ENCODE measurements at regions of chr11 and their contacts with region 1.

Region 1: DNA sequence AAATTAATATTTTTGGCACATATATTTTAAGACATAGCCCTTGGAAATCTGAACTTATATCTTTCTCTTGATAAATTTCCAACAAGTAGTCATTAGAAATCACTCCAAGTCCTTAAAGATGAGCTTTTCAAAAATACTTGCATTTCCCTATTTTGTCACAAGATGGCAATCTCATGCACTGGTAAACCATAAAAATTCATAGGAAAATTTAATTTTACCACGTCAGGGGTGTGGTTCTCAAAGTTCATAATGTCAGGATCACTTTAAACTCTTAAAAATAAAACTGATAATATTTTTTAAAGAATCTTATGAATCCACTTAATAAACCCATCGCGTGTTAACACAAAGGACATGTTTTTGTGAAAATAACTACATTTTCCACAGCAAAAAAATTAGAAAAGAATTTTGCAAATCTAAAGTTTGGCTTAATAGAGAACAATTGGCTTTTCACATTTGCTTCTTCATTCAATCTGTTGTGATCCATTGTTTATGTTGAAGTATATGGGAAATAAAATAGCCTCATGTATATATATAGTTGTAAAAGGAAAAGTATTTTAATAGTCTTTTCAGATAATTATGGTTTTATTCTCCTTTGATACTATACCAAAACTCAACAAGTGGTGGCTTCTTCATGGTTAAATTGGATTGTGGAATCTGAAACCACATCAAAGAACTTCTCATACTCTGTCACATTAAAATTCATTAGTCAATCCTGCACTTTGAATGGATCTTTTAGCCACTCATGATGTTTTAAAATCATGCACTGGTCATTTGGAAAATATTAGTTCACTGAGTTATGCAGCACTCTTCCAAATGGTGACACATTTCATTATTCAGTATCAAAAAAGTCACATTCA is 169.1 kb downstream of the CADM1 start:
- DNase-seq: no peak
- ATAC-seq: no peak

Region 2: GRCh38 chr11:115042002-115042401 is 293.2 kb before region 1 on chr11:
- intact Hi-C with region 1: no loop called
- DNase-seq: no peak
- ATAC-seq: no peak

Region 3: DNA sequence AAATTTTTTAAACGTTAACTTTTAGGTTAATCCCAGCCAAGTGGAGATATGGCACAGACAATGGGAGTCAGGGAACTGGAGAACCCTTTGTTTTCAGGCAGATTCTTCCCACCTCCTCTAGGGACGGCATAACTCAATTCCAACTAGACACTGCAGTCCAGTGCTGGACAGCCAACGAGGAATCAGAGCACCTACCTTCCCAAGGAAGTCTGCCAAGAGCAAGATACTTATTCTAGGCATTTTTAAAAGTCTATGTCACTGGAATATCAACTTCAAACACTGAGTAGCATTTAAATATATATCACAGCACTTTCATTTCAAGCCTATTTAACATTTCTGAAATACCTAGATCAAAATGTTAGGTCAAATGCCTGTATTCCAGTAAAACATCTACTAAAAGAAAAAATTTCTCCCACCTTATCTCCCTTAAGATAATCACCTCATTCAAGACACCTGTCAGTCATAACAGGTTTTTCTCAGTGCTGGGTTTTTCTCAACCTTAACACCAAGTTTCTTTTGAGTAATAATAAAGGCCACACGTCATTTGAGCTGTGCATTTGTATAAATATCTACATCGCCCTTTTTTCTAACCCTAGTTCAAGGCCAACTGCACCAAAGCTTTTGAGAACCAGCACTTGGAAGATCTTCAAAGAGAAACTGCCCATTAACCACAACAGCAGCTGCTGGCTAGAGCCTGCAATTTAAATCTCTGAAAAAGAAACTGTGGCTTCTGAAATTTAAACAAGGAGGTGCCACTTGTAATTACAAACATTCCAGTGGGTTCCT is 161.9 kb after region 1 on chr11:
- intact Hi-C with region 1: loop called in 1 of 2 experiments (anchors 10 kb)
- DNase-seq: no peak
- ATAC-seq: no peak

Region 4: DNA sequence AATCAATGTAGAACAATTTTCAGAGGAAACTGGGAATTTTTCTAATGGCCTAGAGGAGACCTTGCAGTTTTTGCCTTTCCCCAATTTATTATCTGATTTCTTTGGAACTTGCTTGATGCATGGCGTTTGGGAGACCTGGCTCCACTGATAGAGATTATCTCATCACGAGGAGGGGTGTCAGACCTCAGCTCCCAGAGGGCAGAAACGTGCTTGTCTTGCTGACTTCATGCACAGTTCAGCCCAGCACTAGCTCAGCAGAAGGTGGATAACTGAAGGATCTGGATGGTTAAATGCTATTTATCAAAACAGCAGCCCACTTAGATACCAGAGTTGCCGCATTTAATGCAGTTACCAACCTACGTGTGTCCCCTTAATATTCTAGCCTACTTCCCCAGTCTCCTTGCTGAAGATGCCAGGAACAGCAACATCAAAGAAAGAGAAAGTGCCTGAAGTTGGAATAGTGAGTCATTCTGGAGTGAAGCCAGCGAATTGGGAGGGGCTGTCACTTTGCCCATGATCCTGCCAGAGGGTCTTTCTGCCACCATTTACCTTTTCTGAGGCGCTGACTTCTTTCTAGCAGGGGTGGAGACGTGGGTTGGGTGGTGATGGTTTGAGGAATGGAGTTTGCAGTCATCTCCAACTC is 302.6 kb after region 1 on chr11:
- intact Hi-C with region 1: no loop called
- DNase-seq: no peak
- ATAC-seq: no peak

Region 5: GRCh38 chr11:116276051-116277044 is 941.2 kb after region 1 on chr11:
- intact Hi-C with region 1: loop called in 1 of 2 experiments (anchors 5 kb)
- DNase-seq: peak; percentile 55 to 79
- ATAC-seq: peak; percentile 94

Measured in left colon (tissue), 2 donors.